HepG2 (cell line): ENCODE measurements at regions of chr13 and their contacts with region 1.

Region 1: GRCh38 chr13:26186118-26186870 is 35.8 kb downstream of the RNF6 start:
- DNase-seq: peak; percentile 83
- ATAC-seq: peak; percentile 95
- H3K4me3 ChIP-seq: peak overlapping the region; percentile 57 to 79 (median 63)
- H3K27ac ChIP-seq: peak overlapping the region; percentile 57
- H3K4me1 ChIP-seq: peaks cover 17% of the 10 kb centered on the region; the same call in 1 of the 2 replicates
- H3K27me3 ChIP-seq: no peaks in the 10 kb centered on the region
- CTCF ChIP-seq: peak; percentile 88
- EP300 ChIP-seq: no peak
- POLR2A ChIP-seq: peak; percentile 36 to 63; a peak in 3 of 4 replicates
- RAD21 ChIP-seq: peak; percentile 77

Region 2: GRCh38 chr13:25963674-25964073 is 222.6 kb before region 1 on chr13:
- CTCF ChIA-PET with region 1: no interaction called
- POLR2A ChIA-PET with region 1: no interaction called
- in situ Hi-C with region 1: no loop called
- intact Hi-C with region 1: no loop called
- DNase-seq: no peak
- ATAC-seq: no peak
- H3K4me3 ChIP-seq: no peak overlapping the region
- H3K27ac ChIP-seq: no peak overlapping the region
- H3K4me1 ChIP-seq: no peaks in the 10 kb centered on the region
- H3K27me3 ChIP-seq: peaks cover 0 to 5% of the 10 kb centered on the region in 2 experiments; a peak in 1 of 5 replicates
- CTCF ChIP-seq: no peak
- EP300 ChIP-seq: no peak
- POLR2A ChIP-seq: no peak
- RAD21 ChIP-seq: no peak

Region 3: GRCh38 chr13:26253787-26254582 is 67.7 kb after region 1 on chr13 and contains the start of gene CDK8:
- CTCF ChIA-PET with region 1: no interaction called
- POLR2A ChIA-PET with region 1: interaction called, 4 read pairs
- in situ Hi-C with region 1: no loop called
- intact Hi-C with region 1: loop called (anchors 2 kb)
- DNase-seq: peak; percentile 83
- ATAC-seq: peak; percentile 90
- H3K4me3 ChIP-seq: peak within 1 kb of the TSS; percentile 80 to 91 (median 90)
- H3K27ac ChIP-seq: peak within 1 kb of the TSS; percentile 87
- H3K4me1 ChIP-seq: peaks cover 39% of the 10 kb centered on the region
- H3K27me3 ChIP-seq: no peaks in the 10 kb centered on the region; a peak in 1 of 5 replicates
- CTCF ChIP-seq: peak; percentile 34
- EP300 ChIP-seq: no peak
- POLR2A ChIP-seq: peak; percentile 62 to 77
- RAD21 ChIP-seq: no peak
- total RNA-seq, gene CDK8: 16.4 and 21.3 TPM in 2 replicates

Region 4: GRCh38 chr13:26495750-26496149 is 309.5 kb after region 1 on chr13:
- CTCF ChIA-PET with region 1: interaction called, 16 read pairs
- POLR2A ChIA-PET with region 1: interaction called, 6 read pairs
- in situ Hi-C with region 1: loop called (anchors 5 kb)
- intact Hi-C with region 1: loop called (anchors 1 kb)
- DNase-seq: no peak
- ATAC-seq: no peak
- H3K4me3 ChIP-seq: no peak overlapping the region
- H3K27ac ChIP-seq: no peak overlapping the region
- H3K4me1 ChIP-seq: no peaks in the 10 kb centered on the region
- H3K27me3 ChIP-seq: peaks cover 1 to 22% of the 10 kb centered on the region in 2 experiments; a peak in 4 of 5 replicates
- CTCF ChIP-seq: no peak
- EP300 ChIP-seq: no peak
- POLR2A ChIP-seq: no peak
- RAD21 ChIP-seq: no peak

Region 5: DNA sequence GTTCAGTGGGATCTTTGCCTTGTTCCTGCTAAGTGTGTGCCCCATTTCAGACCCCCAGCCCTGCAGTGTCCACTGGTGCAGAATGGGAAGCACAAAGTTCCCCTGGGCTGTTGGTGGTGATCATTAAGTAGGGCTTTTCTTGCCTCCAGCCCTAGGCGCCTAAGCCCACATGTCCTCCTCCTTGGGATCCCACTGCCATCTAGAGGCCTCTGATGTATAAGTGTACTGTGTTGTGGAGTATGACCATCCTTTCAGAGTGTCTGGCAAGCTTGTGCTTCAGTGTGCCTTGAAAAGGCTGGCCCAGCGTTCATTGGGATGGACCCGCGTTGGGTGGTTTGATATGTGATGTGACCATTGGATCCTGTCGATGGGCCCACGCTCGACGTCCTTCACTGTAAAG is 442.4 kb after region 1 on chr13:
- CTCF ChIA-PET with region 1: interaction called, 6 read pairs
- POLR2A ChIA-PET with region 1: no interaction called
- in situ Hi-C with region 1: loop called (anchors 10 kb)
- intact Hi-C with region 1: no loop called
- DNase-seq: peak; percentile 28
- ATAC-seq: peak; percentile 88
- H3K4me3 ChIP-seq: no peak overlapping the region
- H3K27ac ChIP-seq: no peak overlapping the region
- H3K4me1 ChIP-seq: no peaks in the 10 kb centered on the region
- H3K27me3 ChIP-seq: no peaks in the 10 kb centered on the region
- CTCF ChIP-seq: peak; percentile 36
- EP300 ChIP-seq: no peak
- POLR2A ChIP-seq: no peak
- RAD21 ChIP-seq: no peak

Region 6: DNA sequence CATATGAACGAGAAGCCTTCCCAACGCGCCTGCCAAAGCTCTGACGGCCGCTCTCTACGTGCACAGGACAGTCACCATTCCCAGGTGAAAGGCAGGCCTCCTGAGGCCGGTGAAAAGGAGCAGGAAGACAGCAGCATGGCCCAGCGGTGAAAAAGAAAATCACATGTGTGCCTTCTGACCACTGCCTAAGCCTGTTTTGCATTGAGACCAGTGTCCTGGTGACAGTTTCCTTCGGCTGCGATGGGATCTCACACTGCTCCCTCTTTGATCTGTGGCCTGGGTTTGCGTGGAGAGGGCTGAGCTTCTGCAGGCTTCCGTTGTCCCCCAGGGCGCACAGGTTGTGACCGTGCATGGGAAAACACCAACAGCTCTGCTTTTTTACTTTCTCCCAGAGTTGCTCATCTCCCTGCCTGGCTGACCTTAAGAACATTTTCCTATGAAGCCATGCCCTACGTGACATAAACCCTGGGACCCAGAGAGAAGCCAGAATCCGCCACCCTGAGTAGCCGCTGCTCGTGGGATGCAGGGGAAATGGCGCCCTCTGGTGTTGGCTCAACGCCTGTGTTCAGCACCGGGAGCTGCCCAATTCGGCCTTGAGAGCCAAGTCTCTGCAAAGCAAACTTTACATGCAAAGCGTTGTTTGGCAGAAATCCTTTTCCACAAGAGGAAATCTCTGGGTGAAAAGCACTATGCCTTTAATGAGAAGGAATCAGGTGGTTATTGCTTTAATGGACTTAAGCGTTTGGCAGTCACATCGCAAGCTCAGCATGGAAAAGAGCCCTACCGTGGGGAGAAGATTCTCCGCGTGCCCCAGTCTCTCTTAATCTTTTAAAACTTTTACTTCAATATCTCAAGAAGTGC is 686.5 kb after region 1 on chr13:
- CTCF ChIA-PET with region 1: no interaction called
- POLR2A ChIA-PET with region 1: no interaction called
- in situ Hi-C with region 1: loop called (anchors 25 kb)
- intact Hi-C with region 1: no loop called
- DNase-seq: peak; percentile 31
- ATAC-seq: peak; percentile 96
- H3K4me3 ChIP-seq: no peak overlapping the region
- H3K27ac ChIP-seq: no peak overlapping the region
- H3K4me1 ChIP-seq: no peaks in the 10 kb centered on the region
- H3K27me3 ChIP-seq: no peaks in the 10 kb centered on the region
- CTCF ChIP-seq: peak; percentile 85
- EP300 ChIP-seq: no peak
- POLR2A ChIP-seq: no peak
- RAD21 ChIP-seq: peak; percentile 53